OCI-LY7 (cell line): ENCODE measurements at regions of chr2 and their contacts with region 1.

Region 1: GRCh38 chr2:64750817-64751285 is 97.1 kb upstream of the SERTAD2 start:
- DNase-seq: peak; percentile 99
- H3K4me3 ChIP-seq: peak overlapping the region; percentile 85
- H3K27ac ChIP-seq: peak overlapping the region; percentile 92
- H3K4me1 ChIP-seq: peaks cover 44% of the 10 kb centered on the region
- CTCF ChIP-seq: 0 out of 2 replicates have a peak, but pooled peaks have one; percentile 14

Region 2: DNA sequence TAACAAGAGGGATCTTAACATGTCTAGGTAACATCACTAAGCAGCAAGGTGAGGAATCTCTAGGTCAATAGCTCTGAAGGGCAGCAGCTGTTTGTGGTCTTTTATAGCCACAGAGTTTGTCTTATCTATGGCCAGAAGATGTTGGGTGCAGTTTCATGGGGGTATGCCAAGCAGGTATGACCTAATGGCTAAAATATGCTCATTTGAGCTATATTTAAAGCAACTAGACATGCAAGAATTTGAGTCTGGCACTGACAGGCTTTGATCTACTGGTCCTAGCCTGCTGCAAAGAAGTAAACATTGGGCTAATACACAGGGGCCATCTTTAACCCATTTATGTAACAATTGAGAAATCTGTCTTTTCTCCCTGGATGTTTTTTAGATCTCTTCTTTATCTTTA is 923.1 kb before region 1 on chr2:
- CTCF ChIA-PET with region 1: no interaction called
- POLR2A ChIA-PET with region 1: no interaction called
- intact Hi-C with region 1: no loop called
- DNase-seq: no peak
- H3K4me3 ChIP-seq: no peak overlapping the region
- H3K27ac ChIP-seq: no peak overlapping the region
- H3K4me1 ChIP-seq: peaks cover 28% of the 10 kb centered on the region
- CTCF ChIP-seq: no peak

Region 3: DNA sequence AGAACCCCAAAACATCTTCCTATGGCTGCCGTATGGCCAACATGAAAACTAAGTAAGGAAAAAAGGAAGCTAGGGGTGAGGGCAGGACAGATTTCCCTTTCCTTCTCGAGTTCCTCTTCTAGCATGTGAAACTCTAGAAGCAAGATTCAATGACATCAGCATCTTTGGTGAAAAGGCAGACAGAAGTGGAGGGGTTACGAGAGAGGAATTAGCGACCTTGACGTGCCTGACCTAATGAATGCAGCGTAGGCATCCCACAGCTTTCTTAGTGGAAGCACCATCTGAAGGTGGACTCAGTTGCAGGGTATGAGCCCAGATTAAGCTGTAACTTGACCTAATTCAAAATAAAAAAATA is 558.7 kb before region 1 on chr2:
- CTCF ChIA-PET with region 1: interaction called, 22 read pairs
- POLR2A ChIA-PET with region 1: no interaction called
- intact Hi-C with region 1: no loop called
- DNase-seq: no peak
- H3K4me3 ChIP-seq: no peak overlapping the region
- H3K27ac ChIP-seq: no peak overlapping the region
- H3K4me1 ChIP-seq: peaks cover 40% of the 10 kb centered on the region
- CTCF ChIP-seq: no peak

Region 4: DNA sequence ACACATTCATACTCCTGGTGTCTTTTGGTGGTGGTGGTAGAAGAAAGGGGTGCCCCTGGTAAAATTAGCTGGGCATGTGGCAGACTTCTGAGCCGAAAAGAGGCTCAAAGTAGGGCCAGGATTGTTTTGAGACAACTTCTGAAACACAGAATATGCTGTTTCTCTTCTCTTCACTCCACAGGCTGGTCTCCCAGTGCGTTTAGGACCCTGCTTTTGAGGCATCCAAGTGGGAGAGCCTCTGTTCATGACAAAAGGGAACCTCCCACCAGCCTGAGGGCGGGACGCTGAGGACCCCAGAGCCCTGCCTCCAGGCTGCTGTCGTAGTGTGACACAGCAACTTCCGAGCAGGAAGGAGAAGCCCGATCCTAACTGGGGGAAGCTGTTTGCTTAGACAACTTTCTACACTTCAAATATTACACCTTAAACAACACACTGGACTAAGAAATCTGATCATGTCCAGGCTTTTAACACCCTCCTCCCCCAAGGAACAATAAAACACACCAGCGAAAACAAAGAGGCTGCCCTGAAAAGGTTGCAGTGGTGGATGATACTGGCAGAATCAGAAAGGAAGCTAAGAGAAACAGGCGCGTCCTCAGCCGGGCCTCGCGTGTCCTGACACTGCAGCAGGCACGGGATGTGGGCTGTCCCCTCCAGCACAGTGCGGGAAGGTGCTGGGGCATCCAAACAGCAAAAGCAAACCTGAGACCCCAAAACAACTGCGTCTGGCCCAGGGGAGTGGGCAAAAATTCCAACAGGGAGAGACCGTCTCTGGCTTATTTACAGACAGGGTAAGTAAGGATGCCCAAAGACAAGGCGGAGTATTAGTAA is 106.5 kb before region 1 on chr2:
- CTCF ChIA-PET with region 1: interaction called, 4 read pairs
- POLR2A ChIA-PET with region 1: interaction called, 324 read pairs
- intact Hi-C with region 1: no loop called
- DNase-seq: peak; percentile 79
- H3K4me3 ChIP-seq: peak overlapping the region; percentile 67
- H3K27ac ChIP-seq: peak overlapping the region; percentile 88
- H3K4me1 ChIP-seq: peaks cover 100% of the 10 kb centered on the region
- CTCF ChIP-seq: no peak

Region 5: GRCh38 chr2:64666810-64667438 is 83.9 kb before region 1 on chr2:
- CTCF ChIA-PET with region 1: no interaction called
- POLR2A ChIA-PET with region 1: interaction called, 98 read pairs
- intact Hi-C with region 1: no loop called
- DNase-seq: peak; percentile 79
- H3K4me3 ChIP-seq: peak overlapping the region; percentile 45
- H3K27ac ChIP-seq: peak overlapping the region; percentile 95
- H3K4me1 ChIP-seq: peaks cover 77% of the 10 kb centered on the region
- CTCF ChIP-seq: no peak

Region 6: DNA sequence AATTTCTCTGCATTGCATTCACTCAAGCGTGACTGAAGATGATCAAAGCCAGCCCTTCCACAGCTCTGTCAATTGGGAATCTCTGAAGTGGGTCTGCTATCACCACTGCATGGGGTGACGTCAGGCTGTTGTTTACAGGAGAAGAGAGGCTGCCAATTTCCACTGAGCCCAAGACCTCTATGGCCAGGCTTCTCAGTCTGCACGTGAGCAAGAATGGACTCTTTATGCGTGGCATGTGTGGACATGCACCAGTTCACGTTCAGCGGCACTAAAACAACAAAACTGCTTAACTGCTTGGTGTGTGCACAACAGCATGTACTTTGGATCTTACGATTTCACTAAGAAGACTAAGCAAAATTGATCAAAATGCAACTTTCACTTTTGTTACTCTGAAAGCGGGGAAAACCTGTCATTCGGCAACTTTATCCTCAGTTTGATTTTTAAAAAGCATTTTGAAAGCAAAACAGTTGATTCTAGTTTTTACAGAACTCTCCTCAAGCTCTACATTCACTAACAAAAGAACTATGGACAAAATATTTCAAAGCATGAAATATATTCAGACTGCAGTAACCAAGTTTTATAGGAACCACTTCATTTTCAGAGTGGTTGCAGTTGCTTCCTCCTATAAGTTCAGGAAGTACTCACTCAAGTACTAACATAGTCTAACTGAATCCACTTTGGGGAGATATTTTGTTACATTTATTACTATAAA is 20.1 kb before region 1 on chr2:
- CTCF ChIA-PET with region 1: interaction called, 12 read pairs
- POLR2A ChIA-PET with region 1: interaction called, 146 read pairs
- intact Hi-C with region 1: no loop called
- DNase-seq: peak; percentile 54
- H3K4me3 ChIP-seq: peak overlapping the region; percentile 62
- H3K27ac ChIP-seq: peak overlapping the region; percentile 97
- H3K4me1 ChIP-seq: peaks cover 82% of the 10 kb centered on the region
- CTCF ChIP-seq: no peak

Region 7: DNA sequence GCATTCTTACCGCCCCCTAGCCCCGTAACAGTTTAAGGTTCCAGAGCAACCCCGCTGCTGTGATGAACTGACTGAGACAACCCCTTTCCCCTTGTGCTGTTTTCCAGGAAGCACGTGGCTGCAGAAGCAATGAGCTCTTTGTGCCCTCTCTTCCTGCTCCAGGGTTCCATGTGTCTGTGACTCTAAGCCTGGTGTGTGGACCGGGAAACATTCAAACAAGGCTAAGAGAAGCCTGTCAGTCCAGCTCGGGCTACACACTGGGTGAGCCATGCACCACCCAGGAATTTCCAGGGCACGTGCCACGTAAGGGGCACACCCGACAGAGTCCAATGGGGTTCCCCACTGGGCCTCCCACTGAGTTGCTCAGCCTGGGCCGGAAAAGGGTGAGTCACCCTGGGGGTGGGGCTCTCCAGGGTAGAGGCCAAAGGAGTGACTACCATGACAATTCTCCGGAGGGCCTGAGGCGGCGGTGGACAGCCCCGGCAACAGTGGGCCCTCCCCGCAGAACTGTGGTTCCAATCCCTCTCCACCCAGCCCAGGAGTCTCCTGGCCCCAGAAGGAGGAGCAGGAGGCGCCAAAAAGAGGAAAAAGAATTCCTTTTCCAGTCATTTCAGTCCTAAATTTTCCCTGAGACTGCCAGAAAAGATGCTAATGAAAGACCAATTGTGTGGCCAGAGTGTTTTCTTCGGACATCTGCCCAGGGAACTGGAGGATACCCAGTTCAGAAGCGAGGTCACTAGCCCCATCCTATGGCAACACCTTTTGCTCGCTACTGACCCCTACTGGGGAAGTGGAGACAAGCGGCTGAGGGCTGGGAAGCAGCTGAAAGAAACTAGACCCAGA is 80.5 kb after region 1 on chr2:
- CTCF ChIA-PET with region 1: interaction called, 8 read pairs
- POLR2A ChIA-PET with region 1: no interaction called
- intact Hi-C with region 1: loop called (anchors 1 kb)
- DNase-seq: peak; percentile 84
- H3K4me3 ChIP-seq: no peak overlapping the region
- H3K27ac ChIP-seq: no peak overlapping the region
- H3K4me1 ChIP-seq: peaks cover 6% of the 10 kb centered on the region
- CTCF ChIP-seq: peak; percentile 99

Region 8: DNA sequence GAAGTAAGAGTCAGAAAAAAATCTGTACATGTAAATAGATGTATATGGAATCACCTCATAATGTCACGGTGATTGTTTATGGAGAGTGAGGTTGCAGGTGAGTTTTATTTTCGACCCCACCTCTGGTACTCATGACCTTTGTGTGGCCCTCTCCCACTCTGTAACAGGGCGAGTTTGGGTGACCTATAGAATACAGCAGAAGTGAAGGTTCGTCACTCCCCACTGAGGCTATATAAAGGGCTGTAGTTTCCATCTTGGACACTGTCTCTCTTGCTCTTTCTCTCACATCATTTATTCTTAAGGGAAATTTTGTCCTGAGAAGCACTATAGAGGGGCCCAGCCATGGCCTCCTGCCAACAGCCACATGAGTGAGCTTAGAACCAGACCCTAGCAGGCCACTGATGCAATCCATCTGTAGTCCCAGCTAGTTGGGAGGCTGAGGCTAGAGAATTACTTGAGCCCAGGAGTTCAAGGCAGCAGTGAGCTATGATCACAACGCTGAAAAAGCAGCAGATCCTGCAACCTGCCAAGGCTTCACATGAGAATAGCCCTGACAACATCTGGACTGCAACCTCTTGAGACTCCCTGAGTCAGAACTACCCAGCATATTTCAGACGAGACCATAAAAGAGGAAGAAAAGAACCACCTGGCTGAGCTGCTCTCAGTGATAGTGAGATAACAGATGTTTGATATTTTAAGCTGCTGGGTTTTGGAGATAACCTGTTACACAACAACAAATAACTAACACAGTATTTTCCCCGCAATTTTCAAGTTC is 164.1 kb after region 1 on chr2:
- CTCF ChIA-PET with region 1: no interaction called
- POLR2A ChIA-PET with region 1: interaction called, 7 read pairs
- intact Hi-C with region 1: loop called (anchors 1 kb)
- DNase-seq: peak; percentile 96
- H3K4me3 ChIP-seq: peak overlapping the region; percentile 52
- H3K27ac ChIP-seq: peak overlapping the region; percentile 97
- H3K4me1 ChIP-seq: peaks cover 66% of the 10 kb centered on the region
- CTCF ChIP-seq: no peak